ENCODE measurements at regions of chr7 and their contacts with region 1.

Region 1: GRCh38 chr7:135170274-135170997 is at the start of gene CYREN:
- DNase-seq: peak; percentile 71 to 94 (median 91)
- H3K4me3 ChIP-seq: peak within 1 kb of the TSS; percentile 72 to 99 (median 91)
- H3K27ac ChIP-seq: peak within 1 kb of the TSS; percentile 73 to 99 (median 97)
- H3K27me3 ChIP-seq: no peaks in the 10 kb centered on the region
- CTCF ChIP-seq: peak; percentile 42 to 93 (median 78)
- total RNA-seq, gene CYREN: 18.8 to 45.2 (median 26.9) TPM

Region 2: DNA sequence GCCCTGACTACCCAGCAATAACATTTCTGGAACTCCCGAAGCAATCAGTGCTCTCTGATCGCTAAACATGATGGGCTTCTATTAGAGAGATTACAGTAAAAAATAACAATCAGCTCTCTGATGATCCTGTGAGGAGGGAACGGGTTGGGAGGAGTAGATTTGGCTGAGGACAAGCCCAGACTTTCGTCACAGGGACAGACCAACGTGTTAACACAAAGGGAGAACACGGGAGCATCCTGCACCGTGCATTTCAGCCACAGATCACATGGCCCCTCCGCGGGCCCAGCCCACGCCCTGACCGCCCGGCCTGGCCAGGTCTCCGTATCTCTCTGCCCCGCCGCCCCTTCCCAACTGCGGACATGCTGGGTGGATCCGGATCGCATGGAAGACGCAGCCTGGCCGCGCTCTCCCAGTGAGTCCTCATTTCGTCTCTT is 279.2 kb before region 1 on chr7:
- intact Hi-C with region 1: loop called in 1 of 2 experiments (anchors 10 kb)
- DNase-seq: peak; percentile 59 to 89 (median 82)
- H3K4me3 ChIP-seq: peak overlapping the region; percentile 49 to 90 (median 71)
- H3K27ac ChIP-seq: peak overlapping the region in 58 of 59 donors; percentile 53 to 96 (median 89)
- H3K27me3 ChIP-seq: no peaks in the 10 kb centered on the region
- CTCF ChIP-seq: peak in 9 of 56 donors; percentile 4 to 23 (median 10)

Region 3: DNA sequence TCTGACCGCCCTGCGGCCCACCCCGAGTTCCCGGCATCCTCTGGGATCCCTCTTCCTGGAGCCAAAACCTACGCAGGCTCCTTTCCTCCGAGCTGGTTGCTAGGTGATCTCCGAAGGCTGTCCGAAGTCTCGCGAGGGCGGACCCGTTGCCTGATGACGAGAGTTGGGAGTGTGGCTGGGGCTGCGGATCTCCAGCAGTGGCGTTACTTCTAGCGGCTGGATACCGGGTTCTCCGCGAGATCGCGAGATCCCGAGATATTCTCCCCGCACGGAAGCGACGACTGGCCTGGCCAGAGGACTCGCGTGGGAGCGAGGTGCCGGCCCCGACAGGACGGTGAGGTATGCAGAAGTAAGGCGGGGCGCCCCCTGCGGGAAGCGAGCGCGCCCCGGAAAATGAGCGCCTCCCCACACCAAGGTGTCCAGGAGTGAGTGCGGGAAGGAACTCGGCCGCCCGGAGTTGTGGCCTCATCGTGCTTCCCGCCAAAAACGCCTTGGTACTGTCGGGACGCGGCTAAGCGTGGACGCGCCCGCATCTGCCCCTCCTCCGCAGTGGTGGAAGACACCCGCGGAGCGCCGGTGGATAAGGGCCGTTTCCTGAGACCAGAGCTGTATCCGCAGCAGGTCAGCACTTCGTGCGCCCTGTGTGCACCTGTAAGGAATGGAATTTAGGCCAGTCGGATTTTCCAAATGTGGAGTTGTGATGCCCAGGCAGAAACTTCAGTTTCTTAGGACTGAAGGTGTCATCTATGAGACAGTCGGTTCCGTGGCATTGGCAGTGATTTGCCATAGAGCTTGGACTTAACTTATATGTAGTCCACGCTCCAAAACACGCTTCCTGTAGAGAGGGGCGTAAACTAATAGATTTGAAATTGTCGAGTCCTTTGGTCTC is 183.8 kb before region 1 on chr7 and contains the start of gene AGBL3:
- intact Hi-C with region 1: loop called (anchors 1 to 2 kb)
- DNase-seq: peak; percentile 82 to 97 (median 93)
- H3K4me3 ChIP-seq: peak within 1 kb of the TSS; percentile 65 to 99 (median 82)
- H3K27ac ChIP-seq: peak within 1 kb of the TSS; percentile 44 to 97 (median 92)
- H3K27me3 ChIP-seq: no peaks in the 10 kb centered on the region
- CTCF ChIP-seq: peak; percentile 42 to 91 (median 71)
- total RNA-seq, gene AGBL3: 2.2 to 11.8 (median 5.8) TPM

Region 4: GRCh38 chr7:135147899-135148721 is 22.3 kb before region 1 on chr7 and contains the start of gene TMEM140:
- intact Hi-C with region 1: loop called in 1 of 2 experiments (anchors 1 kb)
- DNase-seq: peak in 2 of 10 donors; percentile 49 to 58
- H3K4me3 ChIP-seq: peak within 1 kb of the TSS; percentile 27 to 75 (median 57)
- H3K27ac ChIP-seq: peak within 1 kb of the TSS; percentile 72 to 98 (median 94)
- H3K27me3 ChIP-seq: no peaks in the 10 kb centered on the region
- CTCF ChIP-seq: peak in 8 of 56 donors; percentile 6 to 23 (median 15)
- total RNA-seq, gene TMEM140: 1.3 to 46.7 (median 10.6) TPM

Region 5: GRCh38 chr7:135211179-135211945 is 40.9 kb after region 1 on chr7 and contains the start of gene WDR91:
- intact Hi-C with region 1: loop called in 1 of 2 experiments (anchors 5 kb)
- DNase-seq: peak; percentile 94 to 98 (median 96)
- H3K4me3 ChIP-seq: peak within 1 kb of the TSS; percentile 66 to 100 (median 91)
- H3K27ac ChIP-seq: peak within 1 kb of the TSS; percentile 64 to 97 (median 90)
- H3K27me3 ChIP-seq: no peaks in the 10 kb centered on the region
- CTCF ChIP-seq: peak in 35 of 56 donors; percentile 3 to 66 (median 29)
- total RNA-seq, gene WDR91: 24.7 to 53.9 (median 37.4) TPM

Measured in dorsolateral prefrontal cortex (tissue), 120 donors.